Activated naive CD4-positive, alpha-beta T cell treated with anti-CD3 and anti-CD28 coated beads for 36 hours (primary cell): ENCODE measurements at regions of chr10 and their contacts with region 1.

Region 1: GRCh38 chr10:89029785-89030437 is 39.3 kb downstream of the FAS start:
- DNase-seq: peak; percentile 85
- H3K4me3 Mint-ChIP-seq: no peak overlapping the region
- H3K27ac Mint-ChIP-seq: no peak overlapping the region
- H3K4me1 Mint-ChIP-seq: peaks cover 22% of the 10 kb centered on the region
- H3K27me3 Mint-ChIP-seq: no peaks in the 10 kb centered on the region

Region 2: GRCh38 chr10:89062861-89063260 is 33.0 kb after region 1 on chr10:
- CTCF ChIA-PET with region 1: interaction called, 11 read pairs
- intact Hi-C with region 1: no loop called
- DNase-seq: peak; percentile 13
- H3K4me3 Mint-ChIP-seq: no peak overlapping the region
- H3K27ac Mint-ChIP-seq: no peak overlapping the region
- H3K4me1 Mint-ChIP-seq: no peaks in the 10 kb centered on the region
- H3K27me3 Mint-ChIP-seq: peaks cover 13% of the 10 kb centered on the region

Region 3: DNA sequence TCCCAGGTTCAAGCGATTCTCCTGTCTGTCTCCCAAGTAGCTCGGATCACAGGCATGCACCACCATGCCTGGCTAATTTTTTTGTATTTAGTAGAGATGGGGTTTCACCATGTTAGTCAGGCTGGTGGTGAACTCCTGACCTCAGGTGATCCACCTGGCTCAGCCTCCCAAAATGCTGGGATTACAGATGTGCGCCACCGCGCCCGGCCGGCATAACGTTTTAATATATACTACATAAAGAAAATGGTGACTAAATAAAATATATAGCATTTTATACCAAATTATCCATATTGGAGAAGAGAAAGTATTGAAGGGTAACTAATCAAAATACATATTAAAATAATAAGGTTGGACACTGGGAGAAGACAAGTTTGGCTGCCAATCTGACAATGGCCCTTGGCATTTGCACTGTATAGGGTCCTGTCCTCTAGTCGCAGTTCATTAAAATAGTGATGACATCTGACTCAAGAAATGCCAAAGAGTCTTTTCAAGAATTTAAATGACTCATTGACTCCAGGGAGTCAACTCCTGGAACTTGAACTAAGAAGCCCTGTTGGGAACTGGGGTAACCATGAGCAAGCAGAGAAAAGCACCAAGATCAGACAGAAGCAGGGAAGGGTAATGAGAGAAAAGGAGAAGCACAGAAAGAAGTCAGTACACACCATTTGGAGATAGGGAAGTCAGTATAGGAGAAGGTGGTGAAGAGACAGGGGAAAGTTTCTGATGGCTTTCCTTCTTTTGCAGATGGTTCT is 86.1 kb after region 1 on chr10:
- CTCF ChIA-PET with region 1: interaction called, 7 read pairs
- intact Hi-C with region 1: loop called (anchors 1 kb)
- DNase-seq: no peak
- H3K4me3 Mint-ChIP-seq: no peak overlapping the region
- H3K27ac Mint-ChIP-seq: no peak overlapping the region
- H3K4me1 Mint-ChIP-seq: no peaks in the 10 kb centered on the region
- H3K27me3 Mint-ChIP-seq: peaks cover 11% of the 10 kb centered on the region

Region 4: DNA sequence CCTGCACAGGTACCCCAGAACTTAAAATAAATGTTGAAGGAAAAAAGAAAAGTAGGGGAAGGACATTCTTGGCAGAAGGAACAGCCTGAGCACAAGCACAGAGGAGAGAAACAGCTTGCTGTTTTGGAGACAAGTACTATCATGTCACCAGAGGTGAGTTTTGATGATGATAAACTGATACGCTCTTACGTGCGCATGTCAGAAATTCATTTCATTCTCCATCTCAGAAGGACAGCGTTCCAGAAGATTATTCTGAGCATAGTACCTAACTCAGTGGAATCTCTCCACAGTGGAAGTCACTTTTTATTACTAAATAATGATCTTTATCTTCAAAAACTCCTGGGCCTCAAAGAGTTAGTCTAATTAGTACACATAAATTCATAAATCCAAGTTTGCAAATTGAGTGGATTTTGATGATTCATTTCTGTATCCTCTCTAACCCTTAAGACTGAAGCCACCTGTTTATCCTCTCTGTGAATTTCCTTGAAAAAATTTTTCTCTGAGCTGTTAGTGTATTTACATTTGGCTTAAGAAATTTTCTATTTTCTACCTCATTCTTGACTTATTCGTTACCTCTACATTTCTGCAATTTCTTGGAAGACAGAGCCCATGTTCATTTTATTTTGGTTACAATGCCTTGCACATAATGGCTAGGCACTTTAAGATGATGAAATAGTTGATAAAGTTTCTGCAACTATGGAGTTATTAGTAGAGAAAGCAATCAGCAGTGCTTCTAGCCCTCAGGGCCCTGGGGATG is 108.6 kb after region 1 on chr10:
- CTCF ChIA-PET with region 1: no interaction called
- intact Hi-C with region 1: no loop called
- DNase-seq: no peak
- H3K4me3 Mint-ChIP-seq: no peak overlapping the region
- H3K27ac Mint-ChIP-seq: no peak overlapping the region
- H3K4me1 Mint-ChIP-seq: peaks cover 6% of the 10 kb centered on the region
- H3K27me3 Mint-ChIP-seq: peaks cover 5% of the 10 kb centered on the region

Region 5: DNA sequence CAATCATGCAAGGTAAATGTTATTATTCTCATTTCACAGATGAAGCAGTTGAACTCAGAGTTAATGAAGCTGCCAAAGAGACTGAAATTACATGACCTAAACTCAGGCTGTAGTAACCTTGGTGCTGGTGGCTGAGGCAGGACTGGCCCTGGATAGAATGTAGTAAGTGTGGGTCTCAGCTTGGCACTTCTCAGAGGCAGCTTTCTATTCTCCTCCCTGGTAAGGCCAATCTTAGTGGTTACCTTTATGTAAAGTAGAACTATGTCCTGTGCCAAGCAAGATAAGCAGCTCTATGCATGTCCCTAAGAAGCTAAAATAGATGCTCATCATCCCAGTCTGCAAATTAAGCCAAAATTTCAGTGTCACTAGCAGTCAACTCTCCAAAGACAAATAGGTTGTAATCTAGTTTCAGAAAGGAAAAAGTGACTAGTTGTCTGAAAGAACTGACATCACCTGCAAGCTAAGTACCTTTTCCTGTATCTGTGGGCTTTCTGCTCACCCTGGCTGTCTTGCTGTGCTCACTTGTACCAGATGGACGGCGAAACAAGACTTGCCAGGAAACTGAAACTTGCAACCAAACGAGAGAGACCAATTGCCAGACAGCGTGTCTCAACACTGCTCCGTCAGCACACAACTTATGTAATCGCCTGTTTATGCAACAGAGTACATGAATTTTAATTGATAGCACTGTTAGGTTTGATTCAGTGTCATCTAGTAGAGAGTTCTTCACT is 133.5 kb after region 1 on chr10:
- CTCF ChIA-PET with region 1: interaction called, 3 read pairs
- intact Hi-C with region 1: loop called (anchors 1 kb)
- DNase-seq: peak; percentile 69
- H3K4me3 Mint-ChIP-seq: peak overlapping the region; percentile 33
- H3K27ac Mint-ChIP-seq: peak overlapping the region; percentile 5
- H3K4me1 Mint-ChIP-seq: peaks cover 36% of the 10 kb centered on the region
- H3K27me3 Mint-ChIP-seq: peaks cover 7% of the 10 kb centered on the region

Region 6: GRCh38 chr10:89201345-89202032 is 171.6 kb after region 1 on chr10:
- CTCF ChIA-PET with region 1: interaction called, 54 read pairs
- intact Hi-C with region 1: no loop called
- DNase-seq: no peak
- H3K4me3 Mint-ChIP-seq: no peak overlapping the region
- H3K27ac Mint-ChIP-seq: no peak overlapping the region
- H3K4me1 Mint-ChIP-seq: peaks cover 2% of the 10 kb centered on the region
- H3K27me3 Mint-ChIP-seq: peaks cover 7% of the 10 kb centered on the region

Region 7: DNA sequence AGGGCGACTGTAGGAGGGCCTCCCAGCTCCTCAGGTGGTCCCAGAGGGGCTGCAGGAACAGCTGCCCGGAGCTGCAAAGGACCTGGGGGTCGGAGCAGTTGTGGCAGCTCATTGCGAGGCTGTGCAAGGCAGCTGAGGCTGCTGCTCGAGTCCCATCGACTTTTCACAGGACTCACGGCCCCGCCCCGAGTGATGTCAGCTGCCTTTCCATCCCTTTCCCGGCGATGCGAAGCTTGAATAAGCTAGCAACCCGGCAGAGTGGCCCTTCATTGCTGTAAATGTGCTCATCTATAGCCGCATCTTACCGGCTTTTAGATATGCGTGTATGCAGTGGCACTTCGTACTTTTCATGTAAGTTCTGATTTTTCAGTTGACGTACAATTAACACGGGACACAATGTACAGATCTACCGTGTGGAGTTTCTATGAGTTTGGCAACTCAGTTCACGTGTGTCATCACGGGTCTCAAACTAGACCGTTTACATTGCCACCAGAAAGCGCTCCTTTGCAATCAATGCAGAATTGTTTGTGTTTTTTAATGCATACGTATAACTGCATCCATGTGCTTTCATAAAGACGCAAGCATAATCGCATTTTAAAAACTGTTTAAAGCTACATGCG is 177.4 kb after region 1 on chr10 and contains the start of gene CH25H:
- CTCF ChIA-PET with region 1: interaction called, 54 read pairs
- intact Hi-C with region 1: loop called (anchors 1 kb)
- DNase-seq: peak; percentile 79
- H3K4me3 Mint-ChIP-seq: peak within 1 kb of the TSS; percentile 75
- H3K27ac Mint-ChIP-seq: no peak within 1 kb of the TSS
- H3K4me1 Mint-ChIP-seq: peaks cover 7% of the 10 kb centered on the region
- H3K27me3 Mint-ChIP-seq: peaks cover 39% of the 10 kb centered on the region
- total RNA-seq, gene CH25H: 0.12 to 0.22 TPM

Region 8: GRCh38 chr10:89563861-89564478 is 534.1 kb after region 1 on chr10:
- CTCF ChIA-PET with region 1: no interaction called
- intact Hi-C with region 1: loop called (anchors 10 kb)
- DNase-seq: peak; percentile 27
- H3K4me3 Mint-ChIP-seq: no peak overlapping the region
- H3K27ac Mint-ChIP-seq: no peak overlapping the region
- H3K4me1 Mint-ChIP-seq: no peaks in the 10 kb centered on the region
- H3K27me3 Mint-ChIP-seq: peaks cover 8% of the 10 kb centered on the region

Region 9: GRCh38 chr10:90817128-90817889 is 1787.4 kb after region 1 on chr10:
- CTCF ChIA-PET with region 1: no interaction called
- intact Hi-C with region 1: no loop called
- DNase-seq: no peak
- H3K4me3 Mint-ChIP-seq: no peak overlapping the region
- H3K27ac Mint-ChIP-seq: no peak overlapping the region
- H3K4me1 Mint-ChIP-seq: no peaks in the 10 kb centered on the region
- H3K27me3 Mint-ChIP-seq: peaks cover 3% of the 10 kb centered on the region